ENCODE measurements at regions of chr14 and their contacts with region 1.

Region 1: DNA sequence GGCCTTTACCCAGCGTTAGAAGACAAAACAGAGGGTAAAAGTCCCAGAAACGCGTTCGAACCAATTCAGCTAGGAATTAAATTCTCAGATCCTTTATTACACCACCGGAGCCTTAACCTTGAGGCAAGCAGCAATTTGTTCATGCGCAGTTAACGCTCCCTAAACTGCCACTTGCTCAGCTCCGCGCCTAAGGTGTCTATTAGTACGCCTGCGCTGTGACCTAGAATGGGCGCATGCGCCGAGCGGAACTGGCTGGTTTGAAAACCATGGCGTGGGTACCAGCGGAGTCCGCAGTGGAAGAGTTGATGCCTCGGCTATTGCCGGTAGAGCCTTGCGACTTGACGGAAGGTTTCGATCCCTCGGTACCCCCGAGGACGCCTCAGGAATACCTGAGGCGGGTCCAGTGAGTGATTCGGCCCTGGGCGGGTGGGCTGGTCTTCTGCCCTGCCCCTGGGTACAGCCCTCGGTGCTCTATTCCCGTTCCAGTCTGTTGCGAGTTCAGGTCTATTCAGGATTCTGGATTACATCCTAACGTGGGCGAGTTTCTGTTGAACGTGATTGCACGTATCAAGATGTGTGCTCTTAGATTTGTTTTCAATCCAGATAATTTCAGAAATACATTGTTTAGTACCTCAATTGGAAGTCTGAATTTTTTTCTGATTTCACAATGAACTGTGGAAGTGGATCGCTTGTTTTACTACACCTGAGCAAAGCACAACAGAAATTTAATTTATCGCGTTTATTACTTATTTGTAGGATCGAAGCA is at the start of gene GEMIN2:
- DNase-seq: peak; percentile 87 to 98 (median 92)
- ATAC-seq: peak; percentile 97 to 99 (median 98)
- H3K4me3 ChIP-seq: peak within 1 kb of the TSS; percentile 73 to 78
- H3K4me3 Mint-ChIP-seq: peak within 1 kb of the TSS; percentile 95 to 98 (median 98)
- H3K27ac ChIP-seq: peak within 1 kb of the TSS; percentile 70
- H3K27ac Mint-ChIP-seq: peak within 1 kb of the TSS; percentile 93 to 96
- H3K4me1 ChIP-seq: peaks cover 10 to 13% of the 10 kb centered on the region in 2 experiments
- H3K4me1 Mint-ChIP-seq: peaks cover 22 to 32% (median 27%) of the 10 kb centered on the region in 3 donors
- H3K27me3 ChIP-seq: no peaks in the 10 kb centered on the region
- H3K27me3 Mint-ChIP-seq: peaks cover 0 to 4% of the 10 kb centered on the region in 2 donors
- total RNA-seq, gene GEMIN2: 12.4 to 17.1 (median 13.9) TPM

Region 2: DNA sequence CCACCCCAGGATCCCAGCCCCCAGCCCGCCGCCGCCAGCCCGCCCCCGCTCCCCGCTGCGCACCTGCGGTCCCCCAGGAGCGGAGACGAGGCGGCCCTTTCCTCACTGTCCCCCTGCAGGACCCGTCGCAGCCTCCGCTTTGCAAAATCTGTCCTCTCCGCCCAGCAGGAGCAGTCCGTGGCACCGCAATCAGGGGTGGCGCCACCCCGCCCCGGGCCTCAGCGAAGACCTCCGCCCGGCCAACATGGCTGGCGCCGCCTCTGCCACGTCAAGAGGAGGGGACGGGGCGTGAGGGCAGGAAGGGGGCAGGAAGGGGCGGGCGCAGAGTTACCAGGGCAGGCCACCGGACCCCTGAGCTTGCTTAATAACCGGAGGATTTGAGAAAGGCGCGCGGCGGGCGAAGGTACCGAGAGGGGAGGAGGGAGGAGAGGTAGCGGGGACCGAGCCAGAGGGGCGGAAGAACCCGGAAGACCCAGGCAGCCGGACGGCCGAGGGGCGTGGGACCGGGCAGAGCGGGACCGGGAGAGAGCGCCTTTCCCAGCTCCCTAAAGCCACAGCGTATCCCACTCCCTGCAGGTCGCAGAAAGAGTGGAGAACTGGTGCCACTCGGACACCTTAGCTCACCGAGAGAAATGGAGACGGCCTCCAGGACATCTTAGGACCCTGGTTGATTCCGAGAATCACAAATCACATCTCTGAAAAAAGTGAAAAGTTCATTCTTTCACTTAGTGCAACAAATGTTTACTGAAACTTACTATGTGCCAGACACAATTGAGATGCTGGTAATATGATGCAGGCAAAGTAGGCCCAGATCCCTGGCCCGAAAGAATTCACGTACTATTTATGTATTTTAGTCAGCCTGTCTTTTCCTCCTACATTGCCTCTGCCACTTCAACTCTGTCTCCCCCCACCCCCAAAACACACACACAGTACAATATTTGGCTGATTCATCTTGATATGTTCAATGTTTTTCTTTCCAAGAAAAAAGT is 11.0 kb before region 1 on chr14 and contains the start of gene SEC23A:
- CTCF ChIA-PET with region 1: interaction called, 6 to 15 read pairs
- POLR2A ChIA-PET with region 1: interaction called, 6 to 24 read pairs
- DNase-seq: peak; percentile 67 to 85 (median 78)
- ATAC-seq: peak; percentile 96 to 98 (median 97)
- H3K4me3 ChIP-seq: peak within 1 kb of the TSS; percentile 61 to 82
- H3K4me3 Mint-ChIP-seq: peak within 1 kb of the TSS; percentile 93 to 97 (median 95)
- H3K27ac ChIP-seq: peak within 1 kb of the TSS; percentile 93
- H3K27ac Mint-ChIP-seq: peak within 1 kb of the TSS; percentile 96 to 98
- H3K4me1 ChIP-seq: peaks cover 11 to 26% of the 10 kb centered on the region in 2 experiments
- H3K4me1 Mint-ChIP-seq: peaks cover 40 to 48% (median 44%) of the 10 kb centered on the region in 3 donors
- H3K27me3 ChIP-seq: no peaks in the 10 kb centered on the region
- H3K27me3 Mint-ChIP-seq: no peaks in the 10 kb centered on the region
- total RNA-seq, gene SEC23A: 42.5 to 58.2 (median 49.3) TPM

Region 3: GRCh38 chr14:39169541-39169900 is 55.3 kb after region 1 on chr14:
- CTCF ChIA-PET with region 1: interaction called in 1 of 2 experiments, 5 read pairs
- POLR2A ChIA-PET with region 1: interaction called in 1 of 2 experiments, 14 read pairs
- DNase-seq: no peak
- ATAC-seq: no peak
- H3K4me3 ChIP-seq: peak overlapping the region; percentile 89 to 98
- H3K4me3 Mint-ChIP-seq: peak overlapping the region; percentile 94 to 98 (median 96)
- H3K27ac ChIP-seq: peak overlapping the region; percentile 86
- H3K27ac Mint-ChIP-seq: peak overlapping the region; percentile 97
- H3K4me1 ChIP-seq: peaks cover 19 to 26% of the 10 kb centered on the region in 2 experiments
- H3K4me1 Mint-ChIP-seq: peaks cover 45 to 56% (median 54%) of the 10 kb centered on the region in 3 donors
- H3K27me3 ChIP-seq: no peaks in the 10 kb centered on the region
- H3K27me3 Mint-ChIP-seq: no peaks in the 10 kb centered on the region

Region 4: DNA sequence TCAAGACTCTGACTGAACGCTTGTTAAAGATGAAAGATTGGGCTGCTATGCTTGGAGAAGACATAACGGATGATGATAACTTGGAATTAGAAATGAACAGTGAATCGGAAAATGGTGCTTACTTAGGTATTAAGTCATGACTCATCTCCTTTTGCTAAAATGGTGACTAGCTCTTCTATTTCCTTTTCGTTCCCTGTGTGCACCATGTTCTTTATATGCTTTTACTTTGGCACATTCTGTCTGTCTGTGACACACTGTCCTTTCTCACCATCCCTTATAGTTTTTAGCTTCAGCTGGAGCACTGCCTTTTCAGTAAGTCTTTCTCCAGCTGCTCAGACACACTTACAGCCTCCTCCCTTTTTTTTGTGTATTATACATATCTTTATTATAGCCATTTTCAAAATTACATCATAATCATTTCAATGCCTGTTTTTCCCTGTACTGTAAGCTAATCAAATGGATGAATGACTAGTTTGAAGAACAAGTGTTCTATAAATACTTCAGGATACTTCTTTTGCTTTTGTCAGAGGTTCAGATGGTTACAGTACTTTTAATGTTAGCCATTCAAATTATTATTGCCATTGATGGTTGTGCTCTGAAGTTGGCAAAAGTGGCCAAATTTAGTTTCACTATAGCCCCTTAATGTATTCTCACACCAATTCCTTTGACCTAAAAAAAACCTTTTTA is 188.0 kb after region 1 on chr14:
- CTCF ChIA-PET with region 1: interaction called in 1 of 2 experiments, 10 read pairs
- POLR2A ChIA-PET with region 1: no interaction called
- DNase-seq: no peak
- ATAC-seq: no peak
- H3K4me3 ChIP-seq: no peak overlapping the region
- H3K4me3 Mint-ChIP-seq: no peak overlapping the region
- H3K27ac ChIP-seq: no peak overlapping the region
- H3K27ac Mint-ChIP-seq: no peak overlapping the region
- H3K4me1 ChIP-seq: no peaks in the 10 kb centered on the region
- H3K4me1 Mint-ChIP-seq: peaks cover 0 to 2% (median 0%) of the 10 kb centered on the region in 3 donors
- H3K27me3 ChIP-seq: no peaks in the 10 kb centered on the region
- H3K27me3 Mint-ChIP-seq: no peaks in the 10 kb centered on the region

Region 5: DNA sequence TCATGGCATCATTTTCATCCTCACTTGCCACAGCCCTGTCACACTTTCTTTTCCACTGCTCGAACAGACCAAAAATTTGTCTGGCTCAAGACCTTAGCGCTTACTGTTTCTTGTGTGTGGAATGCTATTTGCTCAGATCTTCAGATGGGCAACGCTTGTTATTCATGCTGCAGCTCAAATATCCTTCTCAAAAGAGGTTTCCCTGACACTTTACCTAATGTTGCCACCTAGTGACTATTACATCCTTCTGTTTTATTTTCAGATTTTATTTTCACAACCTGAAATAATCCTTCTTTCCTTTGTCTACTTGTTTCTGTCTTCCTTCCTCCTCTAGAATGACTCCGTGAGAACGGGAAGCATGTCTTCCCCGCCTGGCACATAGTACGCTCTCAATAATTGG is 312.3 kb after region 1 on chr14:
- CTCF ChIA-PET with region 1: interaction called in 1 of 2 experiments, 10 read pairs
- POLR2A ChIA-PET with region 1: interaction called, 4 read pairs
- DNase-seq: peak in 1 of 35 experiments; percentile 40
- ATAC-seq: peak in 1 of 4 experiments; percentile 21
- H3K4me3 ChIP-seq: no peak overlapping the region
- H3K4me3 Mint-ChIP-seq: peak overlapping the region; percentile 0 to 24 (median 14)
- H3K27ac ChIP-seq: no peak overlapping the region
- H3K27ac Mint-ChIP-seq: peak overlapping the region; percentile 0 to 36
- H3K4me1 ChIP-seq: peaks cover 29 to 30% of the 10 kb centered on the region in 2 experiments
- H3K4me1 Mint-ChIP-seq: peaks cover 81 to 88% (median 87%) of the 10 kb centered on the region in 3 donors
- H3K27me3 ChIP-seq: no peaks in the 10 kb centered on the region
- H3K27me3 Mint-ChIP-seq: no peaks in the 10 kb centered on the region

Measured in T-cell (primary cell).